Activated CD8-positive, alpha-beta T cell treated with anti-CD3 and anti-CD28 coated beads, Interleukin-2, amount 10 ng/mL, durations not matched to agents 7 days and 5 days (primary cell): ENCODE measurements at regions of chr19 and their contacts with region 1.

Region 1: GRCh38 chr19:14006243-14006765 is at the start of gene RFX1:
- DNase-seq: peak; percentile 100
- ATAC-seq: peak; percentile 80
- H3K4me3 Mint-ChIP-seq: peak within 1 kb of the TSS; percentile 88
- H3K27ac Mint-ChIP-seq: peak within 1 kb of the TSS; percentile 98
- H3K4me1 Mint-ChIP-seq: peaks cover 43% of the 10 kb centered on the region
- H3K27me3 Mint-ChIP-seq: no peaks in the 10 kb centered on the region
- total RNA-seq, gene RFX1: 15.9 to 17.7 TPM

Region 2: DNA sequence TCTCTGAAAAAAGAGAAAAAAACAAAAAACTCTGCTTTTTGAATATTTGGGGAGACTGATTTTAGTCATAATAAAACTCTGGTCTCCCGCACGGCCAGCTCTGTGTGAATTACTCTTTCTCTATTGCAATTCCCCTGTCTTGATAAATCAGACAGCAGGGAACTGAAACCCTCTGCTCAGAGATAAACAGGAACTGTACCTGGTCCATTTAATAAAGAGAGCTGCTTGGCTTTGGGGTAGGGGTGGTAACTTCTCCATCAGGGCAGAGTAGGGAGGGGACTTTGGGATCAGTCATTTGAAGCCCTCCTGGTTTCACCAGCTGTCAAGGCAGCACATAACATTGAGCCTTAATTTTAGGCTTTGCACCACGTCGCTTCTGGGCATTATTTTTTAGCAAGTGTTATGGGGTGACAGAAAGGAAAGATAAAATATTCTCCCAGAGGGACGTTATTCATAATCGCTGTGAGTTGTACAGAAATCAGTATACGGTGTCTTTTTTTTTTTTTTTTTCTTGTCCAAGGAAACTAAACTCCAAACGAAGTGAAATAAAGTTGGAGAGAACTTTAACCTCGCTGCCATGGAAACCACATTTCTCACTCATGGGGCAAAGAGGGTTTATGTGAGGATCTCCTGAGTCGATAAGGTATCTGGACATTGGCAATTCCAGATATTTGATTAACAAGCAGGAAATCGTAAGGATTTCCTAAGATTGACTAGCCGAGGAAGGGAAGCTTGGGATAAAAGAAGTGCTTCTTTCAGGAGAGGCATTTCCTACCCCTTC is 341.0 kb before region 1 on chr19:
- CTCF ChIA-PET with region 1: no interaction called
- POLR2A ChIA-PET with region 1: no interaction called
- DNase-seq: no peak
- ATAC-seq: no peak
- H3K4me3 Mint-ChIP-seq: no peak overlapping the region
- H3K27ac Mint-ChIP-seq: no peak overlapping the region
- H3K4me1 Mint-ChIP-seq: no peaks in the 10 kb centered on the region
- H3K27me3 Mint-ChIP-seq: peaks cover 4% of the 10 kb centered on the region

Region 3: GRCh38 chr19:13952154-13953035 is 53.9 kb before region 1 on chr19 and contains the start of gene DCAF15:
- CTCF ChIA-PET with region 1: interaction called, 3 read pairs
- POLR2A ChIA-PET with region 1: interaction called, 29 read pairs
- DNase-seq: peak; percentile 100
- ATAC-seq: peak; percentile 99
- H3K4me3 Mint-ChIP-seq: peak within 1 kb of the TSS; percentile 97
- H3K27ac Mint-ChIP-seq: peak within 1 kb of the TSS; percentile 93
- H3K4me1 Mint-ChIP-seq: peaks cover 21% of the 10 kb centered on the region
- H3K27me3 Mint-ChIP-seq: no peaks in the 10 kb centered on the region
- total RNA-seq, gene DCAF15: 90.1 to 104 TPM

Region 4: DNA sequence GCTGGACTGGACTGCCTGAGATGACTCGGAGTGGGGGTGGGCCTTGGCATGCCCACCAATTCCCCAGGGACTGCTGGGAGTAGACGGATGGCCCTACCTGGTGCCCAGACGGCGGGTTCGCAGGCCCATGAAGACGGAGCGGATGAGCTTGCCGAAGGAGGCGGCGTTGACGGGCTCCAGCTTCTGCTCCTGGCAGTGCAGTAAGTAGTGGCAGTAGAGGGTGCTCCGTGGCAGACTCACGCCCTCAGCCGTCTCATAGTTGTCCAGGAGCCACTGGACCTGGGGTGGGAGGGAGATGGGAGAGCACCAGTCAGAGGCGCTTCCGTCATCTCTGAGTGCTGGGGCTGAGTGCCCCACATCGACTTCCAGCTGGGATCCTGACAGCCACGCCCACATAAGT is 36.4 kb before region 1 on chr19:
- CTCF ChIA-PET with region 1: no interaction called
- POLR2A ChIA-PET with region 1: no interaction called
- DNase-seq: no peak
- ATAC-seq: no peak
- H3K4me3 Mint-ChIP-seq: no peak overlapping the region
- H3K27ac Mint-ChIP-seq: no peak overlapping the region
- H3K4me1 Mint-ChIP-seq: peaks cover 8% of the 10 kb centered on the region
- H3K27me3 Mint-ChIP-seq: no peaks in the 10 kb centered on the region

Region 5: DNA sequence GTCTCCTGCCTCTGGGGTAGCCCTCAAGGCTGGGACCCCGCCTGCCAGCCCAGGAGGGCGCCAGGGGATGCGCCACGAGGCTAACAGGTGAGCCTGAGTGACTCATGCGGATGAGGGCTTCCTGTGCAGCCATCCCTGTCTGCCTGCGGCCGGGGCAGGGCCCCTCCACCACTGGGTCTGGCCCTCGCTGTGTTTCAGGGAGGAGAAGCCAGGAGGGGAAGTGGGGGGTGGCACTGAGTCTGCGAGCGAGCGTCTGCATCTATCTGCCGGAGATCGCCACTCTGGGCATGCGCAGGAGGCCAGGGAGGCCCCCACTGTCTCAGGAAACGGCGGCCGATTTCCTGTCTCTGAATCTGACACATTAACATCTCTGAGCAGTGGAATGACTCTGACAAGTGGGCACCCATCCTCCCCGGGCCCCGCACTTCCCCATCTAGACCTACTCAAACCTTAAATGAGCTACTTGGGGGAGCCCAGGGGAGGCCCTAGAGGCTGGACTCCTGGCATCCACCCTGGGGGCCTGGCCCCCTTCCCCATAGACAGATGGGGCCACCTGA is 19.9 kb before region 1 on chr19:
- CTCF ChIA-PET with region 1: interaction called, 4 read pairs
- POLR2A ChIA-PET with region 1: interaction called, 56 read pairs
- DNase-seq: peak; percentile 100
- ATAC-seq: peak; percentile 94
- H3K4me3 Mint-ChIP-seq: peak overlapping the region; percentile 69
- H3K27ac Mint-ChIP-seq: peak overlapping the region; percentile 98
- H3K4me1 Mint-ChIP-seq: peaks cover 86% of the 10 kb centered on the region
- H3K27me3 Mint-ChIP-seq: no peaks in the 10 kb centered on the region

Region 6: DNA sequence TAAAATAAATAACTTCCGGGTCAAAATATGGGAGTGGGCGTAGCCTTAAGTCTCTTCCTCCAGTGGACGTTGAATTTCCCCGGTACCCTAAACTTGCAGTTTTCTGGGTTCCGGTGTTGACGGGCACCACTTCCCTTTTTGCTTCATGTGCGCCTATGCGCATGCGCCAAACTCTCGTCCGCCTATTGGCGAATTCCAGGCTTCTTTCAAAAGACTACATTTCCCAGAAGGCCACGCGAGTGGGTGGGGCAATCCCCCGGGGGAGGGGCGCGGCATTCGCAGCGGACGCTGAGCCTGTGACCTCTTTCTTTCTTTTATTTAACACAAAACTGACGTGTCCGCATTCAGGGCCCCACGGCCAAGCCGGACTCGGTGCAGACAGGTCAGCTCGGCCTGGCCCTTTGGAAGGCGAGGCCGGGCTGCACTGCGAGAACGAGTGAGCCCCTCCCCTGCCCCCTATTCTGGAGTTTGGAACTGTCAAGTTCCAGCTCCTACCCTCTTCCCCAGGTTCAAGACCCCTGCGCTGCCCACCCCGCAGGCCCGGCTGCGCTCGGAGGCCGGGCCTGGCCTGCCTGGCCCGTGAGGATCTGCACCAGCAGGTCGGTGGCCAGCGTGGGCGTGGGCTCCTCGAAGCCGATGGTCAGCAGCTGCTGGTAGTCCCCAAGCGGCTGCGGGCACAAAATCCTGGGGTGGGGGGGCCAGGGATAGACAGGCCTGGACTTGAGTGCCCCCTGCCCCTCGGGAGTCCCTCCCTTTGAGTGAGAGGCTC is 75.2 kb after region 1 on chr19:
- CTCF ChIA-PET with region 1: no interaction called
- POLR2A ChIA-PET with region 1: no interaction called
- DNase-seq: peak; percentile 100
- ATAC-seq: peak; percentile 96
- H3K4me3 Mint-ChIP-seq: peak overlapping the region; percentile 92
- H3K27ac Mint-ChIP-seq: peak overlapping the region; percentile 92
- H3K4me1 Mint-ChIP-seq: peaks cover 18% of the 10 kb centered on the region
- H3K27me3 Mint-ChIP-seq: no peaks in the 10 kb centered on the region

Region 7: DNA sequence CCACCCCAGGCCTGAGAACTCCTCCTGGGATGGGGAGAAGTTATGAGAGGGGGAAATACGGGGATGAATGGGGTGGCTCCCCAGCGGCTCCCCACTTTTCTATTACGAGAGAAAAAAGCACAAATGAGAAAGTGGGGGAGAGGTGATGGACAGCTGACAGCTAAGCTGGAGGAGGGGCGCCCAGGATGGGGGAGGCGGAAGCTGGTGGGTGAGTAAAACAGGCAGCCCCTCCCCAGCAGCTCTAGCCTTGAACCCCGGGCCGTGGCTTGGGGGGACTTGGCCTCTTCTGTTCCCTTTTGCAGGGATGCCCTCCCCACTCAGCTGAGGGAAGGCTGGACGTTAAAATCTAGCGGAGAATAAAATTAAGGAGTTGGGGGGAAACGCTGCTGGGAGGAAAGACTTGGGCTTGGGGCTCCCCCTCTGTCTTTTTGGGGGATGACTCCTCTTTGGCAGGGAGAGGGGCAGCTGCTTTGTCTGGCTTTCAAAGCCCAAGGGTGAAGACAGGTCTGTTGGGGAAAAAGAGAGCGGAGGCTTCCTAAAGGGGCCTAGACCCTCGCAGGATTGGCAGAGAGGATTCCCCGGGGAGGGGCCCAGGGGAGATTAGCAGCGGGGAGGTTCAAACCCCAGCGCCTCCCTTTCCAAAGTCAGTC is 85.6 kb after region 1 on chr19:
- CTCF ChIA-PET with region 1: no interaction called
- POLR2A ChIA-PET with region 1: no interaction called
- DNase-seq: peak; percentile 64
- ATAC-seq: peak; percentile 5
- H3K4me3 Mint-ChIP-seq: peak overlapping the region; percentile 93
- H3K27ac Mint-ChIP-seq: peak overlapping the region; percentile 96
- H3K4me1 Mint-ChIP-seq: peaks cover 24% of the 10 kb centered on the region
- H3K27me3 Mint-ChIP-seq: no peaks in the 10 kb centered on the region